ENCODE measurements at regions of chr3 and their contacts with region 1.

Region 1: GRCh38 chr3:17505856-17506255 is 236.6 kb downstream of the TBC1D5 start:
- DNase-seq: no peak

Region 2: GRCh38 chr3:17070606-17071005 is 435.2 kb before region 1 on chr3:
- intact Hi-C with region 1: loop called in 1 of 2 experiments (anchors 5 kb)
- DNase-seq: no peak

Region 3: GRCh38 chr3:17473761-17474160 is 32.1 kb before region 1 on chr3:
- intact Hi-C with region 1: no loop called
- DNase-seq: no peak

Region 4: GRCh38 chr3:17535274-17535673 is 29.4 kb after region 1 on chr3:
- intact Hi-C with region 1: no loop called
- DNase-seq: no peak

Region 5: GRCh38 chr3:17573396-17573795 is 67.5 kb after region 1 on chr3:
- intact Hi-C with region 1: no loop called
- DNase-seq: no peak

Measured in posterior vena cava (tissue), 2 donors.